Right ventricle myocardium superior (tissue), 1 donor: ENCODE measurements at regions of chr14 and their contacts with region 1.

Region 1: GRCh38 chr14:76784266-76785264 is 23.3 kb downstream of the VASH1 start:
- DNase-seq: peak; percentile 89
- ATAC-seq: peak; percentile 88

Region 2: GRCh38 chr14:76710056-76711010 is 74.2 kb before region 1 on chr14:
- intact Hi-C with region 1: loop called (anchors 2 kb)
- DNase-seq: no peak
- ATAC-seq: peak; percentile 67

Region 3: DNA sequence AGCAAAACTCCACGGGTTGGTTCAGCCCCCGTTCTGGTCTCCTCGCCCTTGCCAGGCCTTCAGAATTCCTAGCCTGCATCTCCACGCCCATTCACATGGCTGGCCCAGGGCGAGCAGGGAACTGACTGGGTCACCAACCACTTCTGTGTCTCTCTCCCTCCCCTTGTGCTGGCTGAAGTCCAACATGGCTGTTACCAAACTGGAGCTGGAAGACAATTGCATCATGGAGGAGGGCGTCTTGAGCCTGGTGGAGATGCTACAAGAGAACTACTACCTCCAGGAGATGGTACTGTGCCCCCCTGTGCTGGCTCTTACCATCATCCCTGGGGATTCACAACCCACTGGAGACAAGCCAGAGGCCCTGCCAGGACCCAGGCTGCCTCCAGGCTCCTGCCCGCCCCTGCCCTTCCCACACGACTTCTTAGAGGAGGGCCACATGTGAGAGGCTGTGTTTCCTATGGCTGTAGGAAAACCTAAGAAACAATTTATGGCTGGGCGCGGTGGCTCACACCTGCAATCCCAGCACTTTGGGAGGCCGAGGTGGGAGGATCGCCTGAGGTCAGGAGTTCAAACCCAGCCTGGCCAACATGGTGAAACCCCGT is 51.6 kb after region 1 on chr14:
- intact Hi-C with region 1: no loop called
- DNase-seq: peak; percentile 53
- ATAC-seq: no peak

Region 4: DNA sequence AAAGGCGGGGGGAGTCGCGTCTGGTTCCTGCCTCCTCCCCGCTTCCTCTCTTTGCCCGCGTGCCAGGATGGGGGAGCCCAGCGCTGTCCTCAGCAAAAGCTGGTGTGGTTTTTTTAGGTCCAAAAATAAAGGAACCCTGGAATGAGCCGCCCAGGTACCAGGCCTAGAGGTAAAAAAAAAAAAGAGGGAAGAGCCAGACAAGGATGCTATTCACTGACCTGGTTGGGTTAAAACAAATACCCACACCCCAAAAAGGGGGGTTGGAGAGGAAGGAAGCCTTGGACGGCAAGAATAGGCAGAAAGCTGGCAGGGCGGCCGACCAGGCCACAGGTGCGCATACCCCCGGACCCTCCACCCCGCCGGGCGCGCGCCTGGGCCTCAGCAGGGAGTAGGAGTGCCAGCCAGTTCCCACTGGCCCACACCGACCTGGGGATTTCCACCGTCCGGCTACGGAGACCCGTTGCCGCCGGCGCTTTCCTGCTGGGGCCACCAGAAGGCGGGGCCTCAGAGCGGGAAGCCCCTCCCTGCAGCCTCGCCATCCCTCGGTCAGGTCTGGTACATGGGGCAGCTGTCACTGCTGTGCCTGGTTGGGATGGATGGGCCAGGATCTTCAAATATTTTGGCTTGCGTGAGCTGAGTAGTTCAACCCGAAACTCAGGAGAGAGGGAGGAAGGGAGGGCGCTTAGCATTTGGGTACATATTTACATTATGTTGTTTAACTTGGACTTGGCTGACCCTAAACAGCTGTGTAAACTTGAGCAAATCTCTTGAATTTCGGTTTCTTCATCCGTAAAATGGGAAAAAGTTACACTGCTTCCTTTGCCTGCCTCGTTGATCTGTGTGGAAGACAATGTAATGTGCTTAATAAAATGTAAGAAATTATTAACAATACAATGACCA is 249.3 kb after region 1 on chr14:
- intact Hi-C with region 1: no loop called
- DNase-seq: peak; percentile 92
- ATAC-seq: peak; percentile 75